Panc1 (cell line): ENCODE measurements at regions of chr5 and their contacts with region 1.

Region 1: DNA sequence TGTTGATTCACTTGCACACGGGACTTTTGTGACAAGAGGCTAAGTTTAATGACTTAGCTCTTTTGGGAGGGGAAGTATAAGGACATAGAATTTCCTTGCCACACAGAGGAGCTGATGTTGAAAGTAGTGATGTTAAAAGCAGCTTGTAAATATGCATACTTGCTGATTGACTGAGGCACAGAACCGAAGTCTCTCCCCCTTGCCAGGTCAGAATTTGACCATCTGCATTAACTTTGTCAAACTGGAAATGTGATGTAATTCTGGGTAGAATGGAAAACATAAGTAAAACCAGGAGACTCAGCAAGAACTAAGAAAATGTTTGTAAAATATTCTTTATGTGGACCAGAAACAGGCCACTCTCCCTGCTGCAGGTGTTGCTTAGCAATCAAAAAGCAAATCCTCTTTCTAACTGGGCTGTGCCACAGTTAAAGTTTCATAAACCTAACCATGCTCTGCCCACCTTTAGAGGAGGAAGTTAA is 284.2 kb downstream of the NR3C1 start:
- DNase-seq: no peak
- ATAC-seq: no peak
- H3K4me3 ChIP-seq: no peak overlapping the region
- H3K27ac ChIP-seq: no peak overlapping the region; the same call in 1 of the 2 replicates
- H3K4me1 ChIP-seq: no peaks in the 10 kb centered on the region
- H3K27me3 ChIP-seq: no peaks in the 10 kb centered on the region
- CTCF ChIP-seq: no peak

Region 2: GRCh38 chr5:142386137-142387032 is 732.9 kb before region 1 on chr5:
- CTCF ChIA-PET with region 1: no interaction called
- POLR2A ChIA-PET with region 1: interaction called, 14 read pairs
- in situ Hi-C with region 1: no loop called
- intact Hi-C with region 1: no loop called
- DNase-seq: no peak
- ATAC-seq: 0 out of 2 replicates have a peak, but pooled peaks have one; percentile 27
- H3K4me3 ChIP-seq: no peak overlapping the region
- H3K27ac ChIP-seq: no peak overlapping the region; the same call in 1 of the 2 replicates
- H3K4me1 ChIP-seq: peaks cover 12% of the 10 kb centered on the region; the same call in 1 of the 2 replicates
- H3K27me3 ChIP-seq: no peaks in the 10 kb centered on the region
- CTCF ChIP-seq: no peak

Region 3: GRCh38 chr5:144237851-144238250 is 1118.5 kb after region 1 on chr5:
- CTCF ChIA-PET with region 1: no interaction called
- POLR2A ChIA-PET with region 1: no interaction called
- in situ Hi-C with region 1: no loop called
- intact Hi-C with region 1: no loop called
- DNase-seq: no peak
- ATAC-seq: no peak
- H3K4me3 ChIP-seq: no peak overlapping the region
- H3K27ac ChIP-seq: no peak overlapping the region
- H3K4me1 ChIP-seq: no peaks in the 10 kb centered on the region
- H3K27me3 ChIP-seq: 0 out of 2 replicates have a peak, but pooled peaks cover 2% of the 10 kb centered on the region
- CTCF ChIP-seq: no peak